Naive thymus-derived CD4-positive, alpha-beta T cell (primary cell): ENCODE measurements at regions of chrX and their contacts with region 1.

Region 1: DNA sequence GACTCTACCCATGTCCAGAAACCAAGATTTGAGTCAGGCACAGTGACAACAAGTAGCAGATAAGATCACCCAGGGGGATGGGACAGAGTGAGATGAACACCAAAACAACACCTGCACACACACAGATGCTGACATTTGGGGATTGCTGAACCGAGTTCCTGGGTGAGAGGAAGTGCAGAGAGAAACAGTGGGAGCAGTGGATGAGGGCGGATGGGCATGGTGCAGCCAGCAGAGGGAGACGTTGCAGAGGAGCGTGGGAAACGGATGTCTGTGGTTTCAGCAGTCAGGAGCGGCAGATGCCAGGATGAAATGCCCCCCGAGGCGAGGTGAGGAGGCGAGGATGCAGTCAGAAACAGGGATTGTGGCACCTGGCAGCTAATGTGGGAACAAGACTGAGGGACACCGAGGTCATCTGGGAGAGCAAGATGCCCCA is 78.6 kb upstream of the STS start:
- DNase-seq: peak in 4 of 9 donors; percentile 24 to 31 (median 27)
- ATAC-seq: peak; percentile 50
- H3K4me3 ChIP-seq: no peak overlapping the region
- H3K4me3 Mint-ChIP-seq: peak overlapping the region; percentile 13 to 82 (median 60)
- H3K27ac ChIP-seq: peak overlapping the region; percentile 12
- H3K27ac Mint-ChIP-seq: peak overlapping the region; percentile 26 to 84 (median 74)
- H3K4me1 ChIP-seq: peaks cover 0 to 4% of the 10 kb centered on the region in 2 donors
- H3K4me1 Mint-ChIP-seq: peaks cover 20 to 75% (median 44%) of the 10 kb centered on the region in 7 donors
- H3K27me3 ChIP-seq: no peaks in the 10 kb centered on the region
- H3K27me3 Mint-ChIP-seq: no peaks in the 10 kb centered on the region

Region 2: GRCh38 chrX:7088968-7089615 is 20.1 kb after region 1 on chrX:
- CTCF ChIA-PET with region 1: no interaction called
- POLR2A ChIA-PET with region 1: interaction called, 3 read pairs
- intact Hi-C with region 1: loop called in 1 of 2 experiments (anchors 1 kb)
- DNase-seq: peak in 7 of 9 donors; percentile 40 to 73 (median 58)
- ATAC-seq: peak; percentile 64
- H3K4me3 ChIP-seq: no peak overlapping the region
- H3K4me3 Mint-ChIP-seq: peak overlapping the region in 8 of 10 donors; percentile 5 to 55 (median 46)
- H3K27ac ChIP-seq: peak overlapping the region; percentile 34
- H3K27ac Mint-ChIP-seq: peak overlapping the region; percentile 8 to 93 (median 75)
- H3K4me1 ChIP-seq: peaks cover 11 to 21% of the 10 kb centered on the region in 2 donors
- H3K4me1 Mint-ChIP-seq: peaks cover 14 to 83% (median 48%) of the 10 kb centered on the region in 7 donors
- H3K27me3 ChIP-seq: no peaks in the 10 kb centered on the region
- H3K27me3 Mint-ChIP-seq: no peaks in the 10 kb centered on the region